Dorsolateral prefrontal cortex (tissue), 120 donors: ENCODE measurements at regions of chr22 and their contacts with region 1.

Region 1: GRCh38 chr22:32331918-32332725 is 25.5 kb upstream of the RFPL3 start:
- DNase-seq: no peak
- H3K4me3 ChIP-seq: no peak overlapping the region
- H3K27ac ChIP-seq: no peak overlapping the region
- H3K27me3 ChIP-seq: peaks cover 0 to 4% (median 0%) of the 10 kb centered on the region in 45 donors
- CTCF ChIP-seq: no peak

Region 2: DNA sequence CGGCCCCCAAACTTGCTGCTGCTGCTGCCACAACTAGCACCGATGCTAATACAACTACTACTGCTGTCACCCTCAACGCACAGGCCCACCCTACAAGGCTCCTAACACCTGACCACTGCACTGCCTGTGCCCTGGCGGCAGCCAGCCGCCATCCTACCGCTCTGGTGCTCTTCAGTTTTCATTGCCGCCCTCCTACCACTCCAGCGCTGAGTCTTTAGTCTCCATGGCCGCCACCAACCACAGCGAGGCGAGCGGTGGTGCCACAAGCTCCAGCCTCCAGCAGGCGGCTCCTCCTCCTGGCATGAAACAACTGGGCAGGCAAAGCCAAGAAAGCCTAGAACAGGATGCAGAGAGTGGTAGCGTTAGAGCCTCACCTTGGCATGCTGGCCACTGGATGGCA is 20.6 kb after region 1 on chr22:
- intact Hi-C with region 1: loop called in 1 of 2 experiments (anchors 2 kb)
- DNase-seq: no peak
- H3K4me3 ChIP-seq: no peak overlapping the region
- H3K27ac ChIP-seq: no peak overlapping the region
- H3K27me3 ChIP-seq: no peaks in the 10 kb centered on the region
- CTCF ChIP-seq: no peak

Region 3: GRCh38 chr22:32364210-32364609 is 32.1 kb after region 1 on chr22:
- intact Hi-C with region 1: no loop called
- DNase-seq: no peak
- H3K4me3 ChIP-seq: no peak overlapping the region
- H3K27ac ChIP-seq: no peak overlapping the region
- H3K27me3 ChIP-seq: no peaks in the 10 kb centered on the region
- CTCF ChIP-seq: no peak